ENCODE measurements at regions of chr6 and their contacts with region 1.

Region 1: DNA sequence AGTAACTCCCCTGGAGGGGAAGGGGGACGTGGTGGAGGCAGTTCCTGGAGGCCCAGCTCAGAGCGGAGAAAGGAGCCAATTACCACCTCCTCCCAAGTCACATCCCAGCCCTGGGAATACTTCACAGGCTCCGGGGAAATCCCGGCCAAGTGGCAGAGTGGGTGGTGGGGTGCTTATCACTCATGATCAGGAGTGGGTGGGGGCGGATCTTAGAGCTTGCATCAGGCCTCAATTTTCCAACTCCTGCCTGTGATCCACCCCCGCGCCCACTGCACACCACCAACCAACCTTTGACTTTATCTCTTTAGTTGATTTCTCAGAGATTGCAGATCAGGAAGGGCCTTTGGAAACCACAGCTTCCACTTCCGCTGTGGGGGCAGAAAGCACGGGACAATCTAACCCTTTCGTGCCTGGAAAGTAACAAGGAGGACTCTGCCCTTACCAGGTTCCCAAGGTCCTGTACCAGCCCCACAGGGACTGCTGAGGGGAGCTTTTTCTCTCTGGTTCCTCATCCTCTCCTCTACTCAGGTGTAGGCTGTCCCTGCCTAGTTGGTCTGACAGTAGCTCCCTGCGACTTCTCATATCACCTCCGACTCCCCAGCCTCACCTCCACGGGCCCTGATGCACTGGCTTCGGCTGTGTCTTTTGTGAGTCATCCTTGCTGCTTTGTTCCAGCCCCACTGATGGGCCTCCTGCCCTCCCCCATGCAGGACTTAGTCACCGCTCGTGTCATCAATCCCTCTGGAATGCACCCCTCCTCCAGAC is 24.9 kb upstream of the IER3 start:
- DNase-seq: peak; percentile 79
- H3K4me3 Mint-ChIP-seq: peak overlapping the region; percentile 50
- H3K27ac Mint-ChIP-seq: peak overlapping the region; percentile 76
- H3K4me1 Mint-ChIP-seq: peaks cover 80% of the 10 kb centered on the region
- H3K27me3 Mint-ChIP-seq: no peaks in the 10 kb centered on the region

Region 2: DNA sequence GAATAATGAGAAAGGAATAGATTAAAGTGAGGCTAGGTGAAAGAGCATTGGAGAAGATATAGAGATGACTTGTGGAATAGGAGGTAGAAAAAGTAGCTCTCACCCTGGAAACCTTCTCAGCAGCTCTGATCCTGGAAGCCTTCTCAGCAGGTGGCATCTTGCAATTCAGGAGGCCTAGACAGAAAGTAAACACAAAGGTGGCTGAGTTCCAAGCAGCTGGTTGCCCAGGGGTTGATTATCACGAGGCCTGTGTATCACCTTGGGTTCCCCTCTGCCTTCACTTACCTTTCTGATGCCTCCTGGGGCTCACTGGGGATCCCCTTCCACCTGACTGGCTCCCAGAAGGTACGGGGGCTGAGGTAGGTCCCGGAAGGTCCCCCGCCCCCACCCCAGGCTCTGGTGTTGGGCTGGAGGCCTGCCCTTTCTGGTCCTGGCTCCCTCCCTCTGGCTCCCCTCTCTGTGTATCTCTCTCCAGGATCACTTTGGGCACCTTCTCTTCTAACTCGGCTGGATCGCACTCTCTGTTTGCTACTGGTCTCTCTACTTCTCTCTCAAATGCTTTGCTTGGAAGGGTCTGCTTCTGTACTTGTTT is 61.9 kb before region 1 on chr6:
- CTCF ChIA-PET with region 1: no interaction called
- POLR2A ChIA-PET with region 1: no interaction called
- DNase-seq: no peak
- H3K4me3 Mint-ChIP-seq: no peak overlapping the region
- H3K27ac Mint-ChIP-seq: no peak overlapping the region
- H3K4me1 Mint-ChIP-seq: peaks cover 23% of the 10 kb centered on the region
- H3K27me3 Mint-ChIP-seq: no peaks in the 10 kb centered on the region

Region 3: GRCh38 chr6:30781743-30782424 is 12.6 kb after region 1 on chr6:
- CTCF ChIA-PET with region 1: interaction called, 10 read pairs
- POLR2A ChIA-PET with region 1: no interaction called
- DNase-seq: no peak
- H3K4me3 Mint-ChIP-seq: no peak overlapping the region
- H3K27ac Mint-ChIP-seq: peak overlapping the region; percentile 81
- H3K4me1 Mint-ChIP-seq: peaks cover 77% of the 10 kb centered on the region
- H3K27me3 Mint-ChIP-seq: no peaks in the 10 kb centered on the region

Measured in activated CD4-positive, alpha-beta T cell treated with anti-CD3 and anti-CD28 coated beads, Interleukin-2, amount 10 ng/mL, durations not matched to agents 7 days and 5 days (primary cell).